CD4-positive, alpha-beta memory T cell (primary cell): ENCODE measurements at regions of chrX and their contacts with region 1.

Region 1: DNA sequence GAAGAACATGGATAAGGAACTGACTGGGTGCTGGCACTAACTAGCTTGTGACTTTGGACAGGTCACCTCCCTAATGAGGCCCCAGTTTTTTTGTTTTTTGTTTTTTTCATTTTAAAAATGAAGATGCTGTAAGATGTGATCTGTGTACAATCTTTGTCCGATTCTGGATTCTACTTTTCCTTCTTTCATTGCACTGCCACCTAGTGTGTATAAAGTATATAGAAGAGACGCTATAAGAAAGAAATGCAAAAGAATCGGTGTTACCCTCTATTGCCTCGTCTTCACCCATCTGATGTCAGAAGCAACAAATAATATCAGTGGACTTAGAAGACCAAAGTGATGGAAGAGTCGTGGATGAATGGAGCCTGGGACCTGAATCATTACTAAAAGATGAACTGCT is 58.6 kb upstream of the P2RY10 start:
- DNase-seq: peak in 4 of 5 donors; percentile 5 to 27 (median 10)
- H3K4me3 ChIP-seq: no peak overlapping the region
- H3K4me3 Mint-ChIP-seq: peak overlapping the region in 1 of 8 donors; percentile 50
- H3K27ac ChIP-seq: no peak overlapping the region
- H3K27ac Mint-ChIP-seq: peak overlapping the region in 2 of 7 donors; percentile 43 to 59
- H3K4me1 ChIP-seq: no peaks in the 10 kb centered on the region
- H3K4me1 Mint-ChIP-seq: peaks cover 4 to 10% (median 6%) of the 10 kb centered on the region in 4 donors
- H3K27me3 ChIP-seq: no peaks in the 10 kb centered on the region
- H3K27me3 Mint-ChIP-seq: no peaks in the 10 kb centered on the region

Region 2: GRCh38 chrX:78119521-78120227 is 766.9 kb before region 1 on chrX:
- CTCF ChIA-PET with region 1: no interaction called
- POLR2A ChIA-PET with region 1: no interaction called
- intact Hi-C with region 1: loop called (anchors 5 kb)
- DNase-seq: no peak
- H3K4me3 ChIP-seq: no peak overlapping the region
- H3K4me3 Mint-ChIP-seq: peak overlapping the region in 1 of 8 donors; percentile 24
- H3K27ac ChIP-seq: no peak overlapping the region
- H3K27ac Mint-ChIP-seq: peak overlapping the region in 6 of 7 donors; percentile 24 to 72 (median 40)
- H3K4me1 ChIP-seq: peaks cover 32% of the 10 kb centered on the region
- H3K4me1 Mint-ChIP-seq: peaks cover 11 to 44% (median 29%) of the 10 kb centered on the region in 4 donors
- H3K27me3 ChIP-seq: no peaks in the 10 kb centered on the region
- H3K27me3 Mint-ChIP-seq: no peaks in the 10 kb centered on the region